GM18951 (cell line): ENCODE measurements at regions of chr11 and their contacts with region 1.

Region 1: DNA sequence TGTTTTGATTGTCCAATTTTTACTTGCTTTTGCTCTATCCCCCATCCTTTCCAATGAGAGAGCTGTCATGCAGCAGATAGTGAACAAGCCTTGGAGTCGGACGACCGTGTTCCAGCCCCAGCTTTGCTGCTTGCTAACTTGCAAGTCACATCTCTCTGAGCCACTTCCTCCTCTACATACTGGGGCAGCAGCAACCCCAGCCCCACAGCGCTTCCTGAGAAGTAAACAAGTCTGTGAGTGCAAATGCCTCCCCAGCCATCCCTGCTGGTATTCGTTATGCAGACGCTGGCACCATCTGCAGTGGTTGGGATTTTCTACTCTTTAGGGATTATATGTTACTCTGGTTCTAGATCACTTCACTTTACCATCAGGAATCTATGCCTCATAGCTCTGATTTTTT is 35.0 kb downstream of the TPBGL start:
- POLR2A ChIP-seq: no peak

Region 2: GRCh38 chr11:74739546-74740270 is 535.9 kb before region 1 on chr11:
- in situ Hi-C with region 1: no loop called
- POLR2A ChIP-seq: no peak

Region 3: DNA sequence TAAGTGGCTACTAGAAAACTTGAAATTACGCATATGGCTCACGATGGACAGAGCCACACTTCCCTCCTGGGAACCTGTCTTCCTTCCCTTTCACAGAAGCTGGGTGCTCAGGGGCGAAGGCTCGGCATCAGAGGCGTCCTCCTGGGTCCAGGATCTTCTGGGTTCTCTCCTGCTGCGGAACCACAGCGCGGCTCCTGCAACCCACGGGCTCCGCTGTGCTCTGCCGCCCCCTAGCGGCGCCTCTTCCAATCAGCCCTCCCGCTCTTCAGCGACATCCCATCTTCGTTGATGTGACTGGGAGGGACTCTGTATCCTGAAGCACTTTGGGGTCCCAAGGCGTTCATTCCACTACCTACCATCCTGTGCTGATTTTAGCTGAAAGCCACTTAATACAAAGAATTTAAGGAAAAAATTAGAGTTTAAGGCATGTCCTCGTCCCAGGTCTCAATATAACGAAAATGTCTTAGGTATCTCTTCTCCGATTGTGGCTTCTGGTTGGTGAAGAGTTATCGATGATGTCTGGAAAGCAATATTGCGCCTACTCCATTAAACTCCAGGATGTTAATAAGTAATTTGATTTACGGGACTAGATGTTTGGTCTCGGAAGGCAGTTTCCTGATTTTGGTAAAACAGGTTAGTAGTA is 109.0 kb after region 1 on chr11:
- in situ Hi-C with region 1: loop called (anchors 5 kb)
- POLR2A ChIP-seq: no peak